ENCODE measurements at regions of chr5 and their contacts with region 1.

Region 1: GRCh38 chr5:66595756-66596635 is at the start of gene MAST4:
- DNase-seq: peak; percentile 92 to 93
- ATAC-seq: peak; percentile 93 to 96 (median 95)
- H3K4me3 ChIP-seq: peak within 1 kb of the TSS; percentile 63 to 90 (median 75)
- H3K27ac ChIP-seq: peak within 1 kb of the TSS; percentile 44 to 83 (median 80)
- H3K4me1 ChIP-seq: peaks cover 0 to 52% (median 27%) of the 10 kb centered on the region in 9 donors
- H3K27me3 ChIP-seq: peaks cover 0 to 82% (median 0%) of the 10 kb centered on the region in 7 donors
- CTCF ChIP-seq: no peak
- total RNA-seq, gene MAST4: 58.7 to 93.3 (median 78.4) TPM

Region 2: GRCh38 chr5:66628561-66628960 is 32.6 kb after region 1 on chr5:
- intact Hi-C with region 1: no loop called
- DNase-seq: no peak
- ATAC-seq: no peak
- H3K4me3 ChIP-seq: no peak overlapping the region
- H3K27ac ChIP-seq: peak overlapping the region in 1 of 10 donors; percentile 34
- H3K4me1 ChIP-seq: peaks cover 5 to 20% (median 12%) of the 10 kb centered on the region in 9 donors
- H3K27me3 ChIP-seq: no peaks in the 10 kb centered on the region
- CTCF ChIP-seq: no peak

Region 3: DNA sequence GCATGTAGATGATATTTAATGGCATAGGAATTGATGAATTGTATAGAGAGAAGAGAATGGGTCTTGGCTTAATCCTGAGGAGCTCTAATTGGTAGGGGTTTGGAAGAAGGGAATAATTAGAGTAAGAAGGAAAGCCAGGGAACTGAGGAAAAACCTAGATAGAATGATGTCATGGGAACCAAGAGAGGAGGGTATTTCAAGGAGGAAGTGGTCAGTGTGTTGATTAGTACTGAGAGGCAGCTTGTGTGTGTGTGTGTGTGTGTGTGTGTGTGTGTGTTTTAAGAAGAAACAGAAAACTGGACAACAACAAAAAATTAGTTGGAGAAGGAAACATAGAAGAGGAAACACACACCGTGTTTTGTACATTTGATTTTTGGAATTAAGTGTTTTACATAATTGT is 43.0 kb after region 1 on chr5:
- intact Hi-C with region 1: loop called in 1 of 10 experiments (anchors 5 kb)
- DNase-seq: no peak
- ATAC-seq: no peak
- H3K4me3 ChIP-seq: no peak overlapping the region
- H3K27ac ChIP-seq: peak overlapping the region in 2 of 10 donors; percentile 30 to 67
- H3K4me1 ChIP-seq: peaks cover 5 to 47% (median 28%) of the 10 kb centered on the region in 9 donors
- H3K27me3 ChIP-seq: no peaks in the 10 kb centered on the region
- CTCF ChIP-seq: no peak

Region 4: GRCh38 chr5:66742083-66742895 is 146.3 kb after region 1 on chr5:
- intact Hi-C with region 1: loop called in 4 of 10 experiments (anchors 5 to 10 kb)
- DNase-seq: peak; percentile 28 to 37
- ATAC-seq: peak in 7 of 8 donors; percentile 32 to 67 (median 52)
- H3K4me3 ChIP-seq: no peak overlapping the region
- H3K27ac ChIP-seq: peak overlapping the region in 8 of 10 donors; percentile 2 to 76 (median 19)
- H3K4me1 ChIP-seq: peaks cover 12 to 67% (median 44%) of the 10 kb centered on the region in 9 donors
- H3K27me3 ChIP-seq: no peaks in the 10 kb centered on the region
- CTCF ChIP-seq: peak; percentile 20 to 58 (median 51)